Endothelial cell of umbilical vein (primary cell): ENCODE measurements at regions of chr1 and their contacts with region 1.

Region 1: DNA sequence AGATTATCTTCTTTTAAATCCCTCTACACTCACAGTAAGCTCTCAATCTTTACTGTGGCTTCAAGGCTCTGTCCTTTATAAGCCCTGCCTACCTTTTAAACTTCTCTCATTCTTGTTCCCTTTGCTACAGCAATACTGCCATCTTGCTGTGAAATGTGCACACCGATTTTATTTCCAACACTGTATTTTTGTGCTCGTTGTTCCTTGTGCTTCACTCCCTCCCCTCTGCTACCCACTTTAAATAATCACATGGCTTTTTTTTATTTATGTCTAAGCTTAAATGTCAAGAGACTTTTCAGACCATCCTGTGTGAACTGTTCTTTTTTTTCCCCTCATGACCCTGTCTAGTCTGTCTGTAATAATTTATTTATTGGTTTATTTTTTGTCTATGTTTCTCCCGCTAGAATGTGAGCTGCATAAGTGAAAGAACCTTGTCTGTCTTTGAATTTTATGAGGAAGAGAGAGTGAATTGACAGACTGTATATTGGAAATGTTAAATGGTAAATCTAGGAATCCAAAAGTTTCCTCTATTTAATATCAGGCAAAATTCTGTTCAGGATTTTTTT is 45.7 kb downstream of the ABCD3 start:
- DNase-seq: peak; percentile 74
- H3K4me3 ChIP-seq: no peak overlapping the region
- H3K27ac ChIP-seq: no peak overlapping the region
- H3K4me1 ChIP-seq: no peaks in the 10 kb centered on the region
- H3K27me3 ChIP-seq: no peaks in the 10 kb centered on the region
- CTCF ChIP-seq: peak in 1 of 2 donors; percentile 47
- POLR2A ChIP-seq: no peak

Region 2: DNA sequence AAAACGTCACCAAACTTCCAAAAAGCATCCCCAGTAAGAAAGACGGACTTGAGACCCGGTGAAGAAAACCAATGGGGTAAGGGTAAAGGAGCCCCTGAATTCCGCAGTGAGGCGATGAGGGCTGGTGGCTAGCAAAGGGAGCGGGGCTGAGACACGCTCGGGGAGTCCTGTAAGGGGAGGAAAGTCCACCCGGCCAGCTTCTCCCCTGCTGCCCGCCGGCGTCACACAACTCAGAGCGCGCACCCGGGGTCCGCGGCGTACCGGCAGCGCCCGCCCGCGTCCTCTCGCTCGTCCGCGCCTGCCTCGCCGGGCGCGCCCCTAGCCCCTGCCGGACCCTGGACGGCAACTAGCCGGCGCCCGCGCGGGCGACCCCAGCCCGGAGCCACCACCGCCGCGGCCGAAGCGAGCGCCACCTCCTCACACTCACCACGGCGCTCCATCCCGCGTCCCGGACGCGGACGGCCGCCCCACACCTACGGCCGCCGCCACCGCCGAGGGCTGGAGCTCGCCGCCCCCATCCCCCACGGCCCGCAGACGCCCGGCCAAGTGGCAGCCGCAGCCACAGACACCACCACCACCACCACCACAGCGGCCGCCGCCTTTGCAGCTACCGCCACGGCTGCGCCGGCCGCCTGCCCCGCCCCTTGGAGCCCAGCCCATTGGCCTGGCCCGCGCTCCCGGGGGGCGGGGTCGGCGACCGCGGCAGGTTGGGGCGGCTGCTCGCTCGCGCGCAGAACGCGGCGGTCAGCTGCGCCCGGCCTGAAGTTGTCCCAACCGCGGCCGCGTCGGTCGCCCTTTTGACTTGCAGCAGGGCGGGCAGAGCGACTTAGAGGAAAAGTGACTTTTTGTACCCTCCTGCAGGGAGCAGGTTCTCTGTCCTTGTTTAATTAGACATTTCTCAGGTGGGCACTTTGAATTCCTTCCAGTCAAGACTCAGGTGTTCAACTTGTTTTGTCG is 216.4 kb before region 1 on chr1:
- CTCF ChIA-PET with region 1: no interaction called
- POLR2A ChIA-PET with region 1: no interaction called
- dilution Hi-C with region 1: no loop called
- intact Hi-C with region 1: no loop called
- DNase-seq: peak; percentile 80
- H3K4me3 ChIP-seq: peak overlapping the region; percentile 58 to 98 (median 75)
- H3K27ac ChIP-seq: peak overlapping the region; percentile 90
- H3K4me1 ChIP-seq: peaks cover 23% of the 10 kb centered on the region
- H3K27me3 ChIP-seq: no peaks in the 10 kb centered on the region
- CTCF ChIP-seq: no peak
- POLR2A ChIP-seq: peak; percentile 95

Region 3: DNA sequence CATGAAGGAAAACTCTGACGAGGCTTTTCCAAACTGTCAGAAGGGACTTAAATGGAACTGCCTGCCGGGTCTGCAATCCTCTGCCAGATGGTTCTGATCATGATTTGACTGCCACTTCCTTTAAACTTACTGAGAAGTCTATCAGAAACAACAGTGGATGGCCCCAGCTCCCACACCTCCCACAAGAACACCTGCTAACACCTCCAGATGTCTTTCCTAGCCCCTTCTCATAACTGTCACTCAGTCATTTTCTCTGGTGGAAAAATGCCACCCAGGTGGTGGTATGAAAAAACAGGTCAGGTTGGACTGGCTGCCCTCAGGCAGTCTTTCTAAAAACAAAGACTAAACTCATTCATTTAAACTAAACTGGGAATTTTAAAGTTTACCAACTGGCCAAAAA is 112.4 kb before region 1 on chr1:
- CTCF ChIA-PET with region 1: interaction called, 3 read pairs
- POLR2A ChIA-PET with region 1: no interaction called
- dilution Hi-C with region 1: no loop called
- intact Hi-C with region 1: loop called (anchors 5 kb)
- DNase-seq: no peak
- H3K4me3 ChIP-seq: no peak overlapping the region
- H3K27ac ChIP-seq: no peak overlapping the region
- H3K4me1 ChIP-seq: no peaks in the 10 kb centered on the region
- H3K27me3 ChIP-seq: peaks cover 32 to 46% of the 10 kb centered on the region in 2 experiments
- CTCF ChIP-seq: no peak
- POLR2A ChIP-seq: no peak